ENCODE measurements at regions of chrX and their contacts with region 1.

Region 1: DNA sequence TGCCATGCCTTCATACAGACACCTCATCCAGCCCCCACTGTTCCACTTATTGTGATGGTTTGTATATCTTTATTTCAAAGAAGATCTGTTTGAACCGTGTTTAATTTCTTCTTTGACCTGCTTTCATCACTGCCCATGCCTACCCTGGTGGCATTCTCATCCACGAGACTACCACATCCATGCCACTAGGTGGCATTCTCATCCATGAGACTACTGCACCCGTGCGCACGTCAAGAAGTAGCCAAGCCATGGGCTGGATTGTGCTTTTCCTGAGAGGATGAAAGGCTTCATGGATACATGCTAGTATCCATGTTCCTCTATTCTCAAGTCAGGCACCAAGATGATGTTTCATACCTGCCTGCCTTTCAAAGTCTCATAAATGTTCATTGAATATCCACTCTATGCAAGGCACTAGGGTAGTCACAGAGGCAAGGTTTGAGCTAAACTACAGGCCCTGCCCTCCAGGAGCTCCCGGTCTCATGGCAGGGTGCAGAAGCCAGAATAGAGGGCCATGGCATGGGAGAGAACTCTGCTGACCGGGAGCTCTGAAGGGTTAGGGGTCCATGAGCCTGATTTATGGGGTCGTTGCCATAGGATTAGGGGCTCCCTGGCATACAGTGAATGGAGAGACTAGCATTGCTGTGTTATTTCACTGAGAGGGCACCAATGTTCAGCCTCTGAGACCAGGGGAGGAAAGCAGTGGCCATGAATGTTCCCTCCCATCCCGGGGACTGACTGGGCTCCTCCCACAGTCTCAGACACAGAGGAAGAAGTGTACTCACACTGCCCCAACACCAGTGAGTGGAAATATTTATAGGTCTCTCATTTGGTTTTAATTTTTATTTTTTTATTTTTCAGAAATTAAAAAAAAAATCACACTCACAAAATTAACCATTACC is 24.8 kb upstream of the EOLA2 start:
- DNase-seq: peak; percentile 48 to 55
- H3K4me3 ChIP-seq: no peak overlapping the region
- H3K27ac ChIP-seq: no peak overlapping the region; the same call in 1 of the 2 replicates
- H3K4me1 ChIP-seq: no peaks in the 10 kb centered on the region
- H3K27me3 ChIP-seq: no peaks in the 10 kb centered on the region
- CTCF ChIP-seq: peak; percentile 95

Region 2: GRCh38 chrX:149871940-149872339 is 91.2 kb before region 1 on chrX:
- CTCF ChIA-PET with region 1: no interaction called
- POLR2A ChIA-PET with region 1: no interaction called
- intact Hi-C with region 1: no loop called
- DNase-seq: peak; percentile 26 to 34
- H3K4me3 ChIP-seq: no peak overlapping the region
- H3K27ac ChIP-seq: no peak overlapping the region
- H3K4me1 ChIP-seq: 0 out of 2 replicates have a peak, but pooled peaks cover 8% of the 10 kb centered on the region
- H3K27me3 ChIP-seq: no peaks in the 10 kb centered on the region
- CTCF ChIP-seq: peak; percentile 71

Region 3: DNA sequence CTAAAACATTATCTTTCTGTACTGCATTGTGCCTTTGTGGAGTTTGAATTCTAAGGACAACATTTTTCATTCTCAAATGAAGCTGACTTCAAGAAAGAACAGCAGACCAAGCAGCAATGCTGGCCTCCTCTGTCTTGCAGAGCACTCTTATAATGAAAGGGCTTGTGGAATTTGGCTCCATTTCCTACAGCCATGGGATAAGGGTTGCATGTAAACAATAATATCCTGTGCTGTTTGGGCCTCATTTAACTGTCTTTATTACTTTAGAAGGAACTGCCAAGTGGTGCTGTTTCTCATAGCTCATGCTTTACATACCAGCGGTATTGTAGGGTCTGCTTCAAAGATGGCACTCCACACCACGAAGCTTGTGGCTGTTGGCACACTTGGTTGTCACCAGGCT is 86.5 kb after region 1 on chrX:
- CTCF ChIA-PET with region 1: no interaction called
- POLR2A ChIA-PET with region 1: no interaction called
- intact Hi-C with region 1: loop called (anchors 5 kb)
- DNase-seq: no peak
- H3K4me3 ChIP-seq: no peak overlapping the region
- H3K27ac ChIP-seq: no peak overlapping the region
- H3K4me1 ChIP-seq: peaks cover 31% of the 10 kb centered on the region
- H3K27me3 ChIP-seq: no peaks in the 10 kb centered on the region
- CTCF ChIP-seq: no peak

Region 4: DNA sequence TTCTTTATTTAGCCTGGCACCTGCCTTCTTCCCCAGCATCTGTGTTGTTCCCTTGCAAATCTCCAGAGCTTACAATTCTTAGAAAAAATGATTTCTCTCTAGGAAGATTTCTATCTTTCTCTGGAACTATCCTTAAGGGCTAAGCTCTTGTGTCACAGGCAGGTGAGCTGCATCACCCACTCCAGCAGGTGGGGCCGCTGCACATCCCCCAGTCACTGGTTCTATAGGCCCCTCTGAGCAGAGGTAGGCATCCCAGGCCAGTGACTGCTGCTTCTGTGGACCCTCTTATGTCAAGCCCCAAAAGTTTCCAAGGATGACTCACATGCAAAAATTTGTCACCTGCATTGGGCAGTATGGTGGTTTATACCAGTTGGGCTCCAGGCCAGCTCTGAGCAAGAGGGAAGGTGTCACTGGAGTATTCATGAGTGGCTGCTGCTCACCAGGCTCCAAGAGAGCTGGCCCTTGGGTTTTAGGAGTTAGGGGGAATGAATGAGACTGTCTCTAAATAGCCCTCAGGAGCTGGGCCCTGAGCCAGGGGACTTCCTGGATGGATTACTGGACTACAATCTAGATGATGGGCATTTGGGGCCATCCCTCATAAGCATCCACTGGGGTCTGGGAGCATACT is 183.3 kb after region 1 on chrX:
- CTCF ChIA-PET with region 1: no interaction called
- POLR2A ChIA-PET with region 1: no interaction called
- intact Hi-C with region 1: loop called (anchors 5 kb)
- DNase-seq: peak in 1 of 2 experiments; percentile 34
- H3K4me3 ChIP-seq: no peak overlapping the region
- H3K27ac ChIP-seq: no peak overlapping the region
- H3K4me1 ChIP-seq: no peaks in the 10 kb centered on the region
- H3K27me3 ChIP-seq: no peaks in the 10 kb centered on the region
- CTCF ChIP-seq: 0 out of 2 replicates have a peak, but pooled peaks have one; percentile 23

Region 5: DNA sequence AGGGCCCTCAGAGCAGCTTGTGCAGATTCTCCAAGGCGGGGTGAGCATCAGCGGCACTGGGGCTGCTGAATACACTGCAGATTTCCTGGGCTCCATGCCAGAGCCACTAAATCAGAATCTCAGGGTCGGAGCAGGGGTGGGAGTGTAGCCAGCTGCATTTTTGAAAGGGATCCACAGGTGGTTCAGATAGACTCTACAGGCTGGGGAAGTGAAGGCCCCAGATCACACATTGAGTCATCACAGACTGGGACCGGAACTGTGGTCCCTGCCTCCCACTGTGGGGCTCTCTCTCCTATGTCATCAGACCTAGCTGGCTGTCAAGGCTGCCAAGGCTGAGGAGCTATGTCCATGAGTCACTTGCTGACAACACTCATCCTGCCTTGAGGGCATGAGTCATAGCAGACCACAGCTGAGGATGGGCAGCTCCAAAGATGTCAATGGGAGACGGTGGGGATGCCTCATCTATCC is 237.7 kb after region 1 on chrX:
- CTCF ChIA-PET with region 1: no interaction called
- POLR2A ChIA-PET with region 1: no interaction called
- intact Hi-C with region 1: loop called (anchors 5 kb)
- DNase-seq: peak; percentile 85 to 98
- H3K4me3 ChIP-seq: no peak overlapping the region
- H3K27ac ChIP-seq: no peak overlapping the region
- H3K4me1 ChIP-seq: peaks cover 15% of the 10 kb centered on the region
- H3K27me3 ChIP-seq: no peaks in the 10 kb centered on the region
- CTCF ChIP-seq: no peak

Region 6: GRCh38 chrX:150486011-150486410 is 522.9 kb after region 1 on chrX:
- CTCF ChIA-PET with region 1: no interaction called
- POLR2A ChIA-PET with region 1: no interaction called
- intact Hi-C with region 1: loop called (anchors 5 kb)
- DNase-seq: peak; percentile 33 to 46
- H3K4me3 ChIP-seq: no peak overlapping the region
- H3K27ac ChIP-seq: no peak overlapping the region
- H3K4me1 ChIP-seq: peaks cover 17% of the 10 kb centered on the region
- H3K27me3 ChIP-seq: no peaks in the 10 kb centered on the region
- CTCF ChIP-seq: peak; percentile 85

Region 7: DNA sequence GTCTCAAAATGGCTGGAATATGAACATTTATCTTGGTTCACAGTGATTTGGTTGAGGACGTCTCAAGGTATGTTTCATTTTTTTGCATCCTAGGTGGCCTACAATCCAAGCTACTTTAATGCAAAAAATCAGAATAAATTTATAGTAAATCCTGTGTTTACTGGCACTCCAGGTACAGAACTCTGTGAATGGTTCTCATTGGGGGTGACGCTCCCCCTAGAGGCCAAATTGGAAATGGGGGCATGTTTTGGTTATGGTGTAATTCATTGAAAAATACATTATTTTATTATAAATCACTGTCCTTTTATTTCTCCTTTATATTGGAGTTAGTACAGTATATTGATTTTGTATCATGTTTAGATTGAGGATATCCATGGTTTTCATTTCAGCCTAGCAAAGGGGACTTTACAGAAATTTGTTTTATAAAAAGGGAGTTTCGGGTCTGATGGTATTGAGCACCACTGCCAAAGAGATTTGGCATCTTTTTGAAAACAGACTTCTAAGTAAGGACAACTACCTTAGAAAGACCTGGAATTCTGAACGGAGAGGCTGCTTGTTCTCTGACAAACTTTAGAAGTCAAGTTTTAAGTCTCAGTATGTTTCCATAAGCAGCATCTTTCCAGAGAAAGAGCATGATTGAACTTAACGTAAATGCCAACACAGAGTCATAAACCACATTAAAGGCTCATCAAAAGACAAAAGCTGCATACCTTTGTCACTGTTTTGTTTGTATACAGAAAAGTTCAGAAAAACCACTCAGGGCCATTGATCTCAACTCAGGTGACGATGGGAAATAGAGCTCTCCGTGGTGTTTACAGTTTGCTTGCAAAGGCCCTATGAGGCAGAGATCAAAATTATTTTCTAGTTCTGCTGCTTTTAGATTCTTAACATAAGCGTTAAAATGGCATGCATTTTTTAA is 624.7 kb after region 1 on chrX:
- CTCF ChIA-PET with region 1: no interaction called
- POLR2A ChIA-PET with region 1: no interaction called
- intact Hi-C with region 1: loop called (anchors 2 kb)
- DNase-seq: peak in 1 of 2 experiments; percentile 44
- H3K4me3 ChIP-seq: no peak overlapping the region
- H3K27ac ChIP-seq: no peak overlapping the region
- H3K4me1 ChIP-seq: no peaks in the 10 kb centered on the region
- H3K27me3 ChIP-seq: no peaks in the 10 kb centered on the region
- CTCF ChIP-seq: peak; percentile 94

Region 8: GRCh38 chrX:150715184-150715583 is 752.1 kb after region 1 on chrX:
- CTCF ChIA-PET with region 1: interaction called, 6 read pairs
- POLR2A ChIA-PET with region 1: no interaction called
- intact Hi-C with region 1: loop called (anchors 2 kb)
- DNase-seq: no peak
- H3K4me3 ChIP-seq: no peak overlapping the region
- H3K27ac ChIP-seq: no peak overlapping the region
- H3K4me1 ChIP-seq: peaks cover 6% of the 10 kb centered on the region
- H3K27me3 ChIP-seq: no peaks in the 10 kb centered on the region
- CTCF ChIP-seq: no peak

Region 9: DNA sequence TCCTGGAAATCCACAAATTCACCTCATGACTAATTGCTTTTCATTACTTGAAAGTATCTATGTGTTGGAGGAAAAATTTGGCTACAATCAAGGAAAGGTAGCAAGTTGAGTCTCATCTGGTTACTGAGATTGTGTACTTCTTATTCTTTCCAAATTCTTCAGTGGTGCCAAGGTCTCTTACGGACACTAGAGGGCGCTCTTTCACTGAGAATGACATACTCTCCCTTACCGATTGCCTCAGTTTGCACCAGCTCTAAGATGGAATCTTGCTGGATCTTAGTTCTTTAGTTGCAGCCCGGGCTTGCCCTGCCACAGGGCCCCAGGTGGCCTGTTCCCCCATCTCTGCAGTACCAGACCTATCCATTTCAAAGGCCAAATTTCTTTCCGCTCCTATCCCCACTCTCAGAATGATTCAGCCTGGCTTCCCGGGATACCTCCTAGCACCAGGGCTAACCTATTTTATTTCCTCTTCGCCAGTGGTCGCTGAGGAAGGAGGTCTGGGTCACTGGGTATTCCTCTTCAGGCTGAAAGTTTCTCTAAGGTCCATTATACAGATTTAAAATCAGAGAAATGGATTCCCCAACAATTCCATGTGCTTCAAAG is 1188.7 kb after region 1 on chrX:
- CTCF ChIA-PET with region 1: no interaction called
- POLR2A ChIA-PET with region 1: no interaction called
- intact Hi-C with region 1: no loop called
- DNase-seq: peak; percentile 15 to 46
- H3K4me3 ChIP-seq: no peak overlapping the region
- H3K27ac ChIP-seq: no peak overlapping the region
- H3K4me1 ChIP-seq: no peaks in the 10 kb centered on the region
- H3K27me3 ChIP-seq: peaks cover 60% of the 10 kb centered on the region
- CTCF ChIP-seq: peak; percentile 98